Panc1 (cell line): ENCODE measurements at regions of chr2 and their contacts with region 1.

Region 1: DNA sequence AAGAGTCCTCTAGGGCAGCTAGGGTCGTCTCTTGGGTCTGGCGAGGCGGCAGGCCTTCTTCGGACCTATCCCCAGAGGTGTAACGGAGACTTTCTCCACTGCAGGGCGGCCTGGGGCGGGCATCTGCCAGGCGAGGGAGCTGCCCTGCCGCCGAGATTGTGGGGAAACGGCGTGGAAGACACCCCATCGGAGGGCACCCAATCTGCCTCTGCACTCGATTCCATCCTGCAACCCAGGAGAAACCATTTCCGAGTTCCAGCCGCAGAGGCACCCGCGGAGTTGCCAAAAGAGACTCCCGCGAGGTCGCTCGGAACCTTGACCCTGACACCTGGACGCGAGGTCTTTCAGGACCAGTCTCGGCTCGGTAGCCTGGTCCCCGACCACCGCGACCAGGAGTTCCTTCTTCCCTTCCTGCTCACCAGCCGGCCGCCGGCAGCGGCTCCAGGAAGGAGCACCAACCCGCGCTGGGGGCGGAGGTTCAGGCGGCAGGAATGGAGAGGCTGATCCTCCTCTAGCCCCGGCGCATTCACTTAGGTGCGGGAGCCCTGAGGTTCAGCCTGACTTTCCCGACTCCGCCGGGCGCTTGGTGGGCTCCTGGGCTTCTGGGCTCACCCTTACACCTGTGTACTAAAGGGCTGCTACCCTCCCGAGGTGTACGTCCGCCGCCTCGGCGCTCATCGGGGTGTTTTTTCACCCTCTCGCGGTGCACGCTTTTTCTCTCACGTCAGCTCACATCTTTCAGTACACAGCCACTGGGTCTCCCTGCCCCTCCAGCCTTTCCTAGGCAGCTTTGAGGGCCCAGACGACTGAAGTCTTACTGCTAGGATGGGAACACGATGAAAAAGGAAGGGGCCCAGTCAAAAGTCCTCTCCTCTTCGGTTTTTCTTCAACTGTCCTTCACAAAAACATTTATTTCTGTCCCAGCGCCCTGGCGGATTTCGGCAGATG is 8.1 kb downstream of the SIX2 start:
- DNase-seq: no peak
- ATAC-seq: peak; percentile 31
- H3K4me3 ChIP-seq: peak overlapping the region; percentile 16 to 34
- H3K27ac ChIP-seq: no peak overlapping the region
- H3K4me1 ChIP-seq: no peaks in the 10 kb centered on the region
- H3K27me3 ChIP-seq: peaks cover 14% of the 10 kb centered on the region
- CTCF ChIP-seq: no peak

Region 2: DNA sequence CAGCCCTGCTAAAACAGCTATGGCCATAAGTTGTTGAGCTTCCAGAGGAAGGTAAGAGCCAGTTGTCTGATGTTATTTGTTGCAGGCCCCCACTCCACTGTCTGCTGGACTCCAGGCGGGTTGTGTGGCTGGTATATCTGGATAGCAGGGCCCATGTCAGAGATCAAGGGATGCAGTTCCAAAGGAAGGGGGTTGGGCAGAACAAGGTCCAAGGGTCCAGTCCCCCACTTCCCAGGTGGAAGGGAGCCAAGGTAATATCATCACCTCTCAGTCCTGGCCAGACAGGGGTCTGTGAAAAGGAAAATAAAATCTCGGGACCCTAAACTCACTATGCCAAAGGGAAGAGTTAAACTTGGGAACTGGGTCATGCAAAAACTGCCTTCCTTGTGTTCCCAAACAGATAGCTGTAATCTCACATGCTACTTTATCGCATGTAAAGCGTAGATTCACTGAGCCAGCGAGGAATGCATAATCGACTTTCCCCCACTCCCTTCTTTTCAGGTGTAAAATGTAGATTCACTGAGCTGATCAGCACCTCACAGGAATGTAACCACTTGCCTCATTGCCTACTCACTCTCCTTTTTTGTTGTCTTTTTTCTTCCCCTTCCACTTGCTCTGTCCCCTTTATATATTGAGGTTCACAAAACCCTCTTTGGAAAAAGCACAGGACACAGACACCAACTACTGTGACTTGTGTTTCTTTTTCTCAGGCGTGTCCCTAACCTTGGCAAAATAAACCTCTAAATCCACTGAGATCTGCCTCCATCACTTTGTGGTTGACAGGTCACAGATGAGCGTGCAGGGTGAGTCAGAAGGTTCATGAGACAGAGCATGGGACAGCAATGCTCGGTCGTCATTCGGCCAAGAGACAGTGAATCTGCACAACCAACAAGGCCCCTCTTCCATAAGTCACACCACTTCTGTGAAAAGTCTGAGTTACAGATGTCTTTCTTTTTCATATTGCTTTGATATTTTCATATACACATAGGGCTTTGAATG is 263.3 kb after region 1 on chr2:
- CTCF ChIA-PET with region 1: interaction called, 15 read pairs
- POLR2A ChIA-PET with region 1: no interaction called
- in situ Hi-C with region 1: no loop called
- intact Hi-C with region 1: no loop called
- DNase-seq: no peak
- ATAC-seq: no peak
- H3K4me3 ChIP-seq: no peak overlapping the region
- H3K27ac ChIP-seq: no peak overlapping the region
- H3K4me1 ChIP-seq: 0 out of 2 replicates have a peak, but pooled peaks cover 3% of the 10 kb centered on the region
- H3K27me3 ChIP-seq: no peaks in the 10 kb centered on the region
- CTCF ChIP-seq: no peak